ENCODE measurements at regions of chr16 and their contacts with region 1.

Region 1: DNA sequence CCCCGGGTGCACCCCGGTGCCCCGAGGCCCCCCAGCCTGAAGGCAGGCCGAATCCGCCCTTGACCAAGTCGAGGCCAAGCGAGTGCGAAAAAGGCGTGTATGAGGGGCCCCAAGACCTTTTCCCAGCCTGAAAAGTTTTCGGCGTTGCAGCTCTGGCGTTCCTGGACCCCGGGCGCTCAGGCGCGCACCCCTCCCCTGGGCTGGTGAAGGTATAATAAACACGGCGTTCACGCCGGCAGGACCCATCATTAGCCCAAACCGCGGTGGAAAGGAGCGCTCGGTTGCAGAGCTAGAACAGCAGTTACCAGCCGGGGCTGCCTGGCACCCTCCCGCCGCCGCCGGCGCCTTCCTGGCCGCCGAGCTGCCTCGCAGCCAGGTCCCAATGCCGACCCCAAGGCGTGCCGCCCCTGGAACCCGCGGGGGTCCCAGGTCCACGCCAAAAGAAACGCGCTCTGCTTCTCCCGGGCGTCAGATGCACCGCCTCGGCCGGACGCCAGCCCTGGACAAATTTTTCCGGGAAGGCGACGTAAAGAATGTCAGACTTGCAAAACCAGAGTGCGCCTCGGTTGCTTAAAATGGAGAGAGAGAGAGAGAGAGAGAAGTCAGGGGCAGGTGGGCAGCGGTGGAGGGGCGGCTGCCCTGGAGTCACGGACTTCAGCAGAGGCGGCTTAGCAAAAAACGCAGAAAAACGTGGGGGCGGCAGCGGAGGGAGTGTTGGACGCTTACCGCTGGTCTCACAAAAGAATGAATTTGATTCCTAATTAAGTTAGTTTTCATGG is 11.5 kb upstream of the FOXF1 start:
- DNase-seq: no peak
- H3K4me3 Mint-ChIP-seq: no peak overlapping the region
- H3K27ac Mint-ChIP-seq: no peak overlapping the region
- H3K4me1 Mint-ChIP-seq: no peaks in the 10 kb centered on the region
- H3K27me3 Mint-ChIP-seq: peaks cover 74% of the 10 kb centered on the region

Region 2: GRCh38 chr16:86508947-86509758 is 10.3 kb after region 1 on chr16:
- CTCF ChIA-PET with region 1: no interaction called
- intact Hi-C with region 1: loop called (anchors 2 kb)
- DNase-seq: no peak
- H3K4me3 Mint-ChIP-seq: peak overlapping the region; percentile 54
- H3K27ac Mint-ChIP-seq: peak overlapping the region; percentile 46
- H3K4me1 Mint-ChIP-seq: peaks cover 32% of the 10 kb centered on the region
- H3K27me3 Mint-ChIP-seq: peaks cover 62% of the 10 kb centered on the region

Region 3: DNA sequence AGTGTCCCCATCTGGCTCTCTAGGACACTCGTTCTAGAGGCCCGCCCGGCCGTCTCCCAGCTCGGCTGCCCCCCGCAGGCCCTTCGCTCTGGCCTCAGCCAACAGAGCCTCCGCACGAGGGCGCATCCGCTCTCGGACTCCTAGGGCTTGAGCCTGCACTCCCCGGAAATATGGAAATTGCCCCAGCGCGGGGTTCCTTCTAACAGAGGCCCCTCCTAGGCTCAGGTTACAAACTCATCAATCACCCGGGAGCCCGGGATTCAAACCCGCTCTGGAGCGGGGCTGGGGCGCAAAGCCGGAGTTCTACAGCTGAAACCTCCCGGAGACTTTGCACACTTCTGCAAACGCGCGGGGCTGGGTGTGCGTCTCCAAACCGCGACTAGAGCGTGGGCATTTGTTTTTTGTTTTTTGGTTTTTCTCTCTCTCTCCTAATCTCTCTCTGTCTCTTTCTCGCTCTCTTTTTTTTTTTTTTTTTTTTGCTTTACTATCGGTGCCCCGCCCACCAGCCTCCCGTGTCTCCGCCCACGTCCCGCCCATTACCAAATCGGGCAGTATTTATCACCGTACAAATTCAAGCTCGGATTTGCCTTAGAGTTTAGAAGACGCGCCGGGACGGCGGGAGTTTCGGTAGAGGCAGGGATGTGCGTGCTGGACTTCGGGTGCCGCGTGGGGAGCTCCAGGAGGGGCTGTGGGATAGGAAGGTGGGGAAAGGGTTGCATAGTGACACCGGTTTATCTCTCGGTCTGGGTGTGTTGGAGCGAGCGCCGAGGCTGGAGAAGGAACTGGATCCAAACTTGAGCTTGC is 77.1 kb after region 1 on chr16:
- CTCF ChIA-PET with region 1: no interaction called
- intact Hi-C with region 1: loop called (anchors 5 kb)
- DNase-seq: peak; percentile 64
- H3K4me3 Mint-ChIP-seq: peak overlapping the region; percentile 65
- H3K27ac Mint-ChIP-seq: no peak overlapping the region
- H3K4me1 Mint-ChIP-seq: peaks cover 12% of the 10 kb centered on the region
- H3K27me3 Mint-ChIP-seq: peaks cover 78% of the 10 kb centered on the region

Region 4: DNA sequence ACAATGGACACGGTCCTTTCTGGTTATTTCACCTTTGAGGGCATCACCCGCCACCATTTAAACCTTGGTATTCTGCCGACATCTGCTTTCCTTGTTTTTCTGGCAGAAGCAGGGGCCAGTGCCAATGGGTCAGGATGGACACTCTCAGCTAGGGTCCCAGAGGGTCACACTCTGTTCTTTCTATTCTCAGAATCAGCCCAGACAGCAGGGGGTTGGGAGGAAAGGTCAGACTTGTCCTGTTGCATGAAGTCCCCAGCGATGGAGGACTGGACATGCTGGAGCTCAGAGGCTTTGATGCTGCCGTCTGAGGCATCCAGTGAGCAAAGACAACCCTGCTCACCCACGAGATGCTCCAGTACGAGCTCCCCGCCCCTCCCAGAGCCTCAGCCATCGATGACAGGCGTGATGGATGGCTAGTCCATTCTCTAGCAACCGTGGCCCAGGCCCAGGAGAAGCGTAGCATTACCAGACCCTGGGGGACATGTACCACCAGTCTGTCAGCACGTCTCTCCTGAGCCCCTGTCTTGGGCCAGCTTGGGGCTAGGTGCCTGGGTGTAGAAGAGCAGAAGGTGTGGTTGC is 141.5 kb after region 1 on chr16:
- CTCF ChIA-PET with region 1: no interaction called
- intact Hi-C with region 1: no loop called
- DNase-seq: no peak
- H3K4me3 Mint-ChIP-seq: no peak overlapping the region
- H3K27ac Mint-ChIP-seq: no peak overlapping the region
- H3K4me1 Mint-ChIP-seq: no peaks in the 10 kb centered on the region
- H3K27me3 Mint-ChIP-seq: peaks cover 2% of the 10 kb centered on the region